Posterior vena cava (tissue), 2 donors: ENCODE measurements at regions of chr11 and their contacts with region 1.

Region 1: GRCh38 chr11:66592457-66593302 is at the starts of genes CCDC87 and CCS:
- DNase-seq: peak; percentile 99
- total RNA-seq, gene CCDC87: 0.24 to 0.46 TPM
- total RNA-seq, gene CCS: 18.8 to 31.8 TPM

Region 2: GRCh38 chr11:65429724-65430405 is 1162.8 kb before region 1 on chr11:
- intact Hi-C with region 1: no loop called
- DNase-seq: peak; percentile 94

Region 3: GRCh38 chr11:66386171-66387069 is 206.3 kb before region 1 on chr11:
- intact Hi-C with region 1: no loop called
- DNase-seq: peak; percentile 96

Region 4: DNA sequence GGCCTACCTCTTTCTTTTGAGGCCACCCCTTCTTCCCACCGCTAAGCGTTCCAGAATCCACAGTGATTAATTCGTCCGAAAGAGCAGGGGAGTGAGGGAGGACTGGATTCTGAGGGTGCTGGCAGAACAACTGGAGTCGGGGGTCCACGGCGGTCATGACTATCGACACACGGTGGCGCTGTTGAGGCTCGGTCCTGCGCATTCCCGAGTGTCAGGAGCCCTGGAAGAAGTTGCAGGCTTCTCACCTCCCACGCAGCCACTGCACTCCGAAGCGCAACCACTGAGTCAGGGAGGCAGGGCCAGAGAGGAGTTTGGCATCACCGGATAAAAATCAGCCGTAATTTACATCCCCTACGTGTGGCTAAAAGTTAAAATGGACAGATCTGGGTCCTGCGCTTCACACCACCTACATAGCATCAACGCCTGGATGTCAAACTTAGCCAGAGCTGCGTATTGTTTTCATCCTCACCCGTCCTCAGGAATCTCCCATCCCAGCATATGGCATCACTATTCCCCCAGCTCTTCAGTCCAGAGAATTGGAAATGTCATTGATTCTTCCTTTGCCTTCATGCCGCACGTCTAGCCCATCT is 13.6 kb before region 1 on chr11:
- intact Hi-C with region 1: no loop called
- DNase-seq: peak; percentile 94

Region 5: DNA sequence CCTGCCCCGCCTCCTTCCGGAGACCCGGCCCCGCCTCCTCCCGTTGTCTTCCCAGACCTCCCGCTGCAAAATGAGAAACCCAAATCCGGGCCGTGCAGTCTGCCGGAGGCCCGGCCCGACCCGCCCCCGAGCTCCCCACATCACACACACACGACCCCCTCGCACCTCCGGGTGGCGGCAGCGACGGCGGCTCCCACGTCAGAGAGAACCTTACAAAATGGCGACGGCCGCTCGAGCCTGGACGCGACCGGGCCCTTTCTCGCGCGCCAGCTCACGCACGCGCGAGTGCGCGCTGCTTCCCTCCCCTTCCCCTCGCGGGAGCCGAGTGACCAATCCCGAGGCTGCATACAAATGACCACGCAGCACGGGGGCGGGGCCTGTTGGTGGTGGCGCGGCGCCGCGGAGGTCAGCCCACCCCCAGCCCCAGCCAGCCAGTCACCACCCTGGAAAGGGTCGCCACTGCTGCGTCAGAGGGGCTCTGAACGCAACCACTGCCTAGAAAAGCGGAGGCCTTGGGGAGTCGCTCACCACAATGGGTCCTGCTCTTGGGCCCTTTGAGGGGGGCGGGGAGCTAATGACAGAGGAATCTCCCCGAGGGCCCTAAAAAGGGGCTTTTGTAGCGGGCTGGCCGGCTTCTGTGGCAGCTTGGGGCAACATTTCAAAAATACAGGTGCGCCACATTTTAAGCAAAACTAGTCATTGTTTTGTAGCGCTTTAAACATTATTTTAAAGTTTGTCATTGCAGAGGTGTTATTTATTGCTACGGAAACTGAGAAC is 85.1 kb after region 1 on chr11 and contains the start of gene RBM4B:
- intact Hi-C with region 1: loop called in 1 of 2 experiments (anchors 5 kb)
- DNase-seq: peak; percentile 99
- total RNA-seq, gene RBM4B: 9.0 to 10.2 TPM